ENCODE measurements at regions of chr7 and their contacts with region 1.

Region 1: DNA sequence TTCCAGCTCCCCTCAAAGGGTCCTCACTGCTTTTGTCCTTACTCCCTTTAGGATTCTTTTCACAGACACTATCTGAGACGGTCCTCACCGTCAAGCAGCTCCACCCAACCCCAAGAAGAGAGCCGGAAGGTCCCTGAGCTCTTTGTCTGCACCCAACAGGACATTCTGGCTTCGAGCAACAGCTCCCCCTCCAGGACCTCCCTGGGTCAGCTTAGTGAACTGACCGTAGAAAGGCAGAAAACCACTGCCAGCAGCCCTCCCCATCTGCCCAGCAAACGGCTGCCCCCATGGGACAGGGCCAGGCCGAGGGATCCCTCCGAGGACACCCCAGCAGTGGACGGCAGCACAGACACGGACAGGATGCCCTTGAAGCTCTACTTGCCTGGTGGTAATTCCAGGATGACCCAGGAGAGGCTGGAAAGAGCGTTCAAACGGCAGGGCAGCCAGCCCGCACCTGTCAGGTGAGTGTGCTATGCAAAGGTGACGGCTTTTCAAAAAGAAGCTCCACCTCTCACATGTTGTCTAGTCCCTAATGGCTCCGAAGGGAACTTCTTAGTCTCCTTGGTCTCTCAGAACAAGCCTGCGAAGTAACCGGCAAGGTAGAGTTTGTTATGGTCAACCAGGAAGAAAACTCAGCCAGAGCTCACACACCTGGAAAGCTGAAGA is 20.0 kb downstream of the MINDY4 start:
- DNase-seq: peak; percentile 52
- ATAC-seq: peak; percentile 81
- H3K4me3 Mint-ChIP-seq: no peak overlapping the region
- H3K27ac Mint-ChIP-seq: no peak overlapping the region
- H3K4me1 Mint-ChIP-seq: peaks cover 7% of the 10 kb centered on the region; the same call in 1 of the 2 replicates
- H3K27me3 Mint-ChIP-seq: no peaks in the 10 kb centered on the region
- CTCF ChIP-seq: no peak

Region 2: DNA sequence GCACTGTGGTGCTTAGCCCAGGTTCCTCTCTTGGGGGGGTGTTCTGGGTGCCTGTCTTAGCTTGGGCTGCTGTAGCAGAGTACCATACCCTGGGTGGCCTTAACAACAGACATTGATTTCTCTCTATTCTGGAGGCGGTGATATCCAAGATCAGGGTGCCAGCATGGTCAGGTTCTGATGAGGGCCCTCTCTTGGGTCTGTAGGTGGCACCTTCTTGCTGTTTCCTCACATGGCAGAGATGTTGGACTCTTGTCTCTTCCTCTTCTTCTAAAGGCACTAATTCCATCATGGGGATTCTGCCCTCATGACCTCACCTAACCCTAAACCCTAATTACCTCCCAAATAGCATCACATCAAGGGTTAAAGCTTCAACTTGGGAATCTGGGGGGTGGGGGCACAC is 89.0 kb before region 1 on chr7:
- CTCF ChIA-PET with region 1: interaction called, 11 read pairs
- POLR2A ChIA-PET with region 1: no interaction called
- DNase-seq: no peak
- ATAC-seq: peak; percentile 13; the same call in 1 of the 2 replicates
- H3K4me3 Mint-ChIP-seq: no peak overlapping the region
- H3K27ac Mint-ChIP-seq: no peak overlapping the region
- H3K4me1 Mint-ChIP-seq: peaks cover 22% of the 10 kb centered on the region
- H3K27me3 Mint-ChIP-seq: peaks cover 5% of the 10 kb centered on the region
- CTCF ChIP-seq: 0 out of 2 replicates have a peak, but pooled peaks have one; percentile 22

Region 3: GRCh38 chr7:30771174-30771879 is 19.9 kb before region 1 on chr7 and contains the start of gene MINDY4:
- CTCF ChIA-PET with region 1: interaction called, 10 read pairs
- POLR2A ChIA-PET with region 1: no interaction called
- DNase-seq: peak; percentile 76
- ATAC-seq: peak; percentile 94
- H3K4me3 Mint-ChIP-seq: peak within 1 kb of the TSS; percentile 79
- H3K27ac Mint-ChIP-seq: no peak within 1 kb of the TSS
- H3K4me1 Mint-ChIP-seq: peaks cover 4% of the 10 kb centered on the region
- H3K27me3 Mint-ChIP-seq: peaks cover 8% of the 10 kb centered on the region; the same call in 1 of the 2 replicates
- CTCF ChIP-seq: no peak
- total RNA-seq, gene MINDY4: 1.8 to 2.2 TPM (median 2.0 TPM) in 3 replicates

Measured in WTC11 (cell line).